ENCODE measurements at regions of chr1 and their contacts with region 1.

Region 1: GRCh38 chr1:150235852-150236613 is at the start of gene ANP32E:
- DNase-seq: peak; percentile 99
- H3K4me3 ChIP-seq: peak within 1 kb of the TSS; percentile 96
- H3K27ac ChIP-seq: peak within 1 kb of the TSS; percentile 95
- H3K4me1 ChIP-seq: peaks cover 21% of the 10 kb centered on the region
- CTCF ChIP-seq: peak; percentile 67
- total RNA-seq, gene ANP32E: 52.8 and 73.5 TPM in 2 replicates

Region 2: GRCh38 chr1:150268705-150269403 is 32.8 kb after region 1 on chr1 and contains the start of gene APH1A:
- CTCF ChIA-PET with region 1: no interaction called
- POLR2A ChIA-PET with region 1: interaction called, 5 read pairs
- intact Hi-C with region 1: loop called (anchors 1 kb)
- DNase-seq: peak; percentile 96
- H3K4me3 ChIP-seq: peak within 1 kb of the TSS; percentile 82
- H3K27ac ChIP-seq: peak within 1 kb of the TSS; percentile 52
- H3K4me1 ChIP-seq: peaks cover 19% of the 10 kb centered on the region
- CTCF ChIP-seq: no peak
- total RNA-seq, gene APH1A: 83.3 and 113 TPM in 2 replicates